ENCODE measurements at regions of chr9 and their contacts with region 1.

Region 1: DNA sequence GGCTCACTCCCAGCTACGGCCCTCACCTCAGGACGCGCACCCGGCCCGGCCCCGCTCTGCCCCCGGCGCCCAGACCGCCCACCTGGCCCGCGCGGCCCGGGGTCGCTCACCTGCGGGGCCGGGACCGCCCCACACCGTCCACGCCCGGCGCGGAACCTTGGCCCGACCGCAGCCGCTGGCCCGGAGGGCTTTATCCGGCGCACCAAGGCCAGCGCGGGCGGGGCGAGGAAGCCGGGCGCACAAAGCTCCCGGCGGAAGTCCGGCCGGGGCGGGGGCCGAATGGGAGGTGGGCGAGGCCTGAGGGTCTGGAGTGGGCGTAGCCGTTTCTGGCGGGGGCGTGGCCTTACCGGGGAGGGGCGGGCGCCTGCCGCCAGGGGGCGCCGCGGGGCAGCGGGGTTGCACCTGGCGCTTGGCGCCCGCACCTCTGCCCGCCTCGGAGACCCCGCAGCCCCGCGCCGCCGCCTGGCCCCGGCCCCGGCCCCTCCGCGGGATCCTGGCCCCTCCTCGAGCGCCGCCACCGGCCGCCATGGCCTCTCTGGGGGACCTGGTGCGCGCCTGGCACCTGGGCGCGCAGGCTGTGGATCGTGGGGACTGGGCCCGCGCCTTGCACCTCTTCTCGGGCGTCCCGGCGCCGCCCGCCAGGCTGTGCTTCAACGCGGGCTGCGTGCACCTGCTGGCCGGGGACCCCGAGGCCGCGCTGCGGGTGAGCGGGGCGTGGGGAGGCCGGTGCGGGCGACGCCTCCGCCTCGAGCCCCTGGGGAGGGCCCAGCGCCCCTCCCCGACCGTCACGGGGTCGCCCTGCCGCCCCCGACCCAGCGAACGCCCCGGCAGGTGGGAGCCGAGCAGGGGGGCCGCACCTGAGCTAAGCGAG is at the starts of genes EXD3 and NOXA1:
- DNase-seq: peak; percentile 92
- H3K4me3 Mint-ChIP-seq: peak within 1 kb of the TSS; percentile 90
- H3K27ac Mint-ChIP-seq: peak within 1 kb of the TSS; percentile 52
- H3K4me1 Mint-ChIP-seq: peaks cover 7% of the 10 kb centered on the region
- H3K27me3 Mint-ChIP-seq: peaks cover 9% of the 10 kb centered on the region
- total RNA-seq, gene EXD3: 4.8 and 4.9 TPM in 2 replicates
- total RNA-seq, gene NOXA1: 0.49 and 0.54 TPM in 2 replicates

Region 2: GRCh38 chr9:137302176-137302994 is 120.9 kb before region 1 on chr9 and contains the start of gene NRARP:
- intact Hi-C with region 1: loop called (anchors 1 kb)
- DNase-seq: peak; percentile 91
- H3K4me3 Mint-ChIP-seq: peak within 1 kb of the TSS; percentile 74
- H3K27ac Mint-ChIP-seq: peak within 1 kb of the TSS; percentile 18
- H3K4me1 Mint-ChIP-seq: peaks cover 9% of the 10 kb centered on the region
- H3K27me3 Mint-ChIP-seq: peaks cover 26% of the 10 kb centered on the region
- total RNA-seq, gene NRARP: 15.2 and 15.4 TPM in 2 replicates

Region 3: GRCh38 chr9:137353223-137354152 is 69.8 kb before region 1 on chr9:
- intact Hi-C with region 1: no loop called
- DNase-seq: no peak
- H3K4me3 Mint-ChIP-seq: no peak overlapping the region
- H3K27ac Mint-ChIP-seq: no peak overlapping the region
- H3K4me1 Mint-ChIP-seq: no peaks in the 10 kb centered on the region
- H3K27me3 Mint-ChIP-seq: no peaks in the 10 kb centered on the region

Region 4: DNA sequence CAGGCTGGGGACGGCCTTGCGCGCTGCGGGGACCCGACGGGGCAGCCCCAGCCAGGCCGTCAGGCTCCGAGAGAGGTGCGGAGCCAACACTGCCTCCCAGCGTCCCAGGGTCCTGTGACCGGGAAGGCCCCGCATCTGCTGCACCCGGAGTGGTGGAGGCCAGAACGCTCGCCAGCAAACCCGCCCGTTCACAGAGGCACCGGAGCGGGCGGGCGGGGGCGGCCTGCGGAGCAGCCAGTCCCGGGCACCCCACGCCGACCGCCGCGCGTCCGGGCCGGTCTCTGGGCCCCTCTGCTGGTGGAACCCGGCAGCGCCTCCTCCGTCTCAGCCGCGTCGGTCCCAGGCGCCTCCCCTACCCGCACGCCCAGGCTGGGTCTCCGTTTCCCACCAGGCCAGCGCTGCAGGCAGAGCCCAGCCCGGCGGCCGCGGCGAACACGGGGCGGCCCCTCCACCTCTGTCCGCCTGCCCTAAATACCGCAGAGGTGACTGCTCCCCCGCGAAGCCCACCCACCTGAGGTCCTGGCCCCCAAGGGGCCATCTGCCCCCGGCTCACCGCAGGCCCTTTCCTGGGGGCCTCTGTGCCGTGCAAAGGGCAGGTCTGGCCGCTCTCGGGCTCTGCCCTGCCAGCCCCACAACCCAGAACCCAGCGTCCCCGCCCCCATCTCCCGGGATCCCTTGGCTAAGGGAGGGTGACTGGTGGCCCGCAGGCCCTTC is 16.2 kb before region 1 on chr9:
- intact Hi-C with region 1: loop called (anchors 1 kb)
- DNase-seq: peak; percentile 56
- H3K4me3 Mint-ChIP-seq: no peak overlapping the region
- H3K27ac Mint-ChIP-seq: no peak overlapping the region
- H3K4me1 Mint-ChIP-seq: no peaks in the 10 kb centered on the region
- H3K27me3 Mint-ChIP-seq: peaks cover 3% of the 10 kb centered on the region

Region 5: GRCh38 chr9:137445275-137445807 is 22.1 kb after region 1 on chr9:
- intact Hi-C with region 1: loop called (anchors 1 kb)
- DNase-seq: peak; percentile 78
- H3K4me3 Mint-ChIP-seq: no peak overlapping the region
- H3K27ac Mint-ChIP-seq: peak overlapping the region; percentile 58
- H3K4me1 Mint-ChIP-seq: peaks cover 13% of the 10 kb centered on the region
- H3K27me3 Mint-ChIP-seq: peaks cover 18% of the 10 kb centered on the region

Region 6: GRCh38 chr9:137521405-137521985 is 98.3 kb after region 1 on chr9:
- intact Hi-C with region 1: loop called (anchors 10 kb)
- DNase-seq: no peak
- H3K4me3 Mint-ChIP-seq: no peak overlapping the region
- H3K27ac Mint-ChIP-seq: no peak overlapping the region
- H3K4me1 Mint-ChIP-seq: no peaks in the 10 kb centered on the region
- H3K27me3 Mint-ChIP-seq: no peaks in the 10 kb centered on the region

Measured in activated T-helper 1 cell treated with anti-CD3 and anti-CD28 coated beads, Interleukin-12 subunit alpha, Interleukin-12 subunit beta, Interleukin-2, Interleukin-4 antibody, amounts not matched to agents 30 ng/mL and 10 ng/mL and 1 ng/mL, durations not matched to agents 14 hours and 24 hours and 36 hours (primary cell).